GM12878 (cell line): ENCODE measurements at regions of chr14 and their contacts with region 1.

Region 1: DNA sequence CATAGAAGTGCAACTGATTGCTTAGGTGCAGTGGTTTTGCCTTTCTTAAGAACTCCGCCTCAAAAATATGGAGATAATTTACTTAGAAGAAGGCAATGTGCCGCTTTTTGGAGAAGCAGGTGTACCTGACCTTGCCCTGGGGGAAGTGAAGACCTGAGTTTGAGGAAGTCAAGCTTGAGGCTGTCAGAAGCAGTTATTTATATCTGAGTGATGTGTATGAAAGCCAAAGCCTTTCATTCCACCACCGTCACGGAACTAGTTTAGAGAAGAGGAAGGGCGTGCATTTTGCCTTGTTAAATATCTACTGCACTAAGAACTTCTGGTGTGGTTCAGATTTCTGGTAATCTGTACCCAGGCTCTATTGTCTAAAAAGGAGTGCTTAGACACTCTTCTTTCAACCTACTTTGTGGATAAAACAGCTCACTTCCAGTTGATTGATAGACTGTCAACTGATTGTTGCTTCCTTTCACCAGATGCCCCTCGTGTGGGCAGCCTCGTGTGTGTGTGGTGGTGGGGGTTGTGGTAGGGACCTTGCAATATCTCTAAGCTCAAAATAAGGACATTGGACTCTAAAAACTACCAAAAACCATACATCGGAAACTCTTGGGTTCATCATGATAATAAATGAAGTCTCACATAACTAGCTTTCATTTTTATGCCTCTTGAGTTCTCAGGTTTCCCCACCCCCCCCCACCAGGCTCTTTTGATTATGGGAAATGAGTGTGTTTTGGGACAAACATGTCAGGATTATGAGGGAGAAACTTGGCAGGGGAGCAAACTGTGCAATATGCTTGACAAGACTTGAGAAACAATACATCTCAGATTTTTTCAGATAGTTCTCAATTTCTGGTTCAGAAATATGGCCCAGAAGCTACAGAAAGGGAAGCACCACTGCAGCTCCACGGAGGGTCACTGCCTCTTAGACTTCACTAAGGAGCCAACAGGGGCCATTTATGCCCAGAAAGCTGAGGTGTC is 78.6 kb downstream of the ARF6 start:
- DNase-seq: peak; percentile 89
- ATAC-seq: peak; percentile 90
- H3K4me3 ChIP-seq: peak overlapping the region; percentile 49
- H3K27ac ChIP-seq: peak overlapping the region; percentile 100
- H3K4me1 ChIP-seq: peaks cover 39% of the 10 kb centered on the region
- H3K27me3 ChIP-seq: no peaks in the 10 kb centered on the region
- CTCF ChIP-seq: no peak
- EP300 ChIP-seq: peak; percentile 90 to 95
- POLR2A ChIP-seq: peak; percentile 24; the same call in 1 of the 2 replicates
- RAD21 ChIP-seq: no peak

Region 2: GRCh38 chr14:49478791-49479190 is 492.7 kb before region 1 on chr14:
- CTCF ChIA-PET with region 1: no interaction called
- POLR2A ChIA-PET with region 1: no interaction called
- RAD21 ChIA-PET with region 1: no interaction called
- SMC1A ChIA-PET with region 1: no interaction called
- in situ Hi-C with region 1: no loop called
- intact Hi-C with region 1: no loop called
- DNase-seq: no peak
- ATAC-seq: no peak
- H3K4me3 ChIP-seq: no peak overlapping the region
- H3K27ac ChIP-seq: no peak overlapping the region
- H3K4me1 ChIP-seq: peaks cover 10% of the 10 kb centered on the region; the same call in 1 of the 2 replicates
- H3K27me3 ChIP-seq: no peaks in the 10 kb centered on the region
- CTCF ChIP-seq: no peak
- EP300 ChIP-seq: no peak
- POLR2A ChIP-seq: no peak
- RAD21 ChIP-seq: no peak

Region 3: GRCh38 chr14:49538926-49539325 is 432.5 kb before region 1 on chr14:
- CTCF ChIA-PET with region 1: no interaction called
- POLR2A ChIA-PET with region 1: no interaction called
- RAD21 ChIA-PET with region 1: no interaction called
- SMC1A ChIA-PET with region 1: no interaction called
- in situ Hi-C with region 1: no loop called
- intact Hi-C with region 1: no loop called
- DNase-seq: no peak
- ATAC-seq: no peak
- H3K4me3 ChIP-seq: no peak overlapping the region
- H3K27ac ChIP-seq: no peak overlapping the region
- H3K4me1 ChIP-seq: no peaks in the 10 kb centered on the region
- H3K27me3 ChIP-seq: no peaks in the 10 kb centered on the region
- CTCF ChIP-seq: no peak
- EP300 ChIP-seq: no peak
- POLR2A ChIP-seq: no peak
- RAD21 ChIP-seq: no peak

Region 4: GRCh38 chr14:49867831-49868723 is 103.4 kb before region 1 on chr14:
- CTCF ChIA-PET with region 1: interaction called, 7 read pairs
- POLR2A ChIA-PET with region 1: interaction called, 23 read pairs
- RAD21 ChIA-PET with region 1: interaction called, 20 read pairs
- SMC1A ChIA-PET with region 1: interaction called, 27 read pairs
- in situ Hi-C with region 1: no loop called
- intact Hi-C with region 1: no loop called
- DNase-seq: peak; percentile 92
- ATAC-seq: peak; percentile 89
- H3K4me3 ChIP-seq: peak overlapping the region; percentile 89
- H3K27ac ChIP-seq: peak overlapping the region; percentile 93
- H3K4me1 ChIP-seq: peaks cover 20% of the 10 kb centered on the region
- H3K27me3 ChIP-seq: no peaks in the 10 kb centered on the region
- CTCF ChIP-seq: no peak
- EP300 ChIP-seq: no peak
- POLR2A ChIP-seq: peak; percentile 83
- RAD21 ChIP-seq: no peak

Region 5: DNA sequence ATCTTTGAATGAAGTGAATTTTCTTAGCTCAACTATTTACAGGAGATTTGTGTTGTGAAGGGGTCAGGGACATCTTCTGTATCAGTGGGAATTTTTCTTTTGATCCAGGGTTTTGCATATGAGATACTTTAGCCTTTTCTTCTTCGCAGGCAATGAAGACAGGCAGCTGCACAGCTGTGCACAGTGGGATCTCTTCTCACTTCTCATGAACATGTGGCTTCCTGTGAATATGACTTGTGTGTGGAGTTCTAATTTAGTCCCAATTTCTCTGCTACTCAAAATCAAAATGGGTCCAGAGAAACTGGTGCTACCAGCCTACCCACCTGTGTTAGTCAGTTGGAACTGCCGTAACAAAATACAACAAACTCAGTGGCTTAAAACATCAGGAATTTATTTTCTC is 40.7 kb before region 1 on chr14:
- CTCF ChIA-PET with region 1: no interaction called
- POLR2A ChIA-PET with region 1: interaction called, 7 read pairs
- RAD21 ChIA-PET with region 1: interaction called, 13 read pairs
- SMC1A ChIA-PET with region 1: interaction called, 4 read pairs
- in situ Hi-C with region 1: no loop called
- intact Hi-C with region 1: loop called (anchors 1 kb)
- DNase-seq: no peak
- ATAC-seq: peak; percentile 42
- H3K4me3 ChIP-seq: no peak overlapping the region
- H3K27ac ChIP-seq: no peak overlapping the region
- H3K4me1 ChIP-seq: peaks cover 16% of the 10 kb centered on the region
- H3K27me3 ChIP-seq: no peaks in the 10 kb centered on the region
- CTCF ChIP-seq: no peak
- EP300 ChIP-seq: no peak
- POLR2A ChIP-seq: no peak
- RAD21 ChIP-seq: no peak

Region 6: GRCh38 chr14:49959822-49960408 is 11.5 kb before region 1 on chr14:
- CTCF ChIA-PET with region 1: interaction called, 24 read pairs
- POLR2A ChIA-PET with region 1: interaction called, 21 read pairs
- RAD21 ChIA-PET with region 1: interaction called, 28 read pairs
- SMC1A ChIA-PET with region 1: interaction called, 60 read pairs
- in situ Hi-C with region 1: no loop called
- intact Hi-C with region 1: no loop called
- DNase-seq: peak; percentile 76
- ATAC-seq: peak; percentile 82
- H3K4me3 ChIP-seq: 0 out of 2 replicates have a peak overlapping the region, but pooled peaks have one; percentile 41
- H3K27ac ChIP-seq: peak overlapping the region; percentile 78
- H3K4me1 ChIP-seq: peaks cover 42% of the 10 kb centered on the region
- H3K27me3 ChIP-seq: no peaks in the 10 kb centered on the region
- CTCF ChIP-seq: no peak
- EP300 ChIP-seq: no peak
- POLR2A ChIP-seq: no peak
- RAD21 ChIP-seq: 0 out of 2 replicates have a peak, but pooled peaks have one; percentile 23

Region 7: DNA sequence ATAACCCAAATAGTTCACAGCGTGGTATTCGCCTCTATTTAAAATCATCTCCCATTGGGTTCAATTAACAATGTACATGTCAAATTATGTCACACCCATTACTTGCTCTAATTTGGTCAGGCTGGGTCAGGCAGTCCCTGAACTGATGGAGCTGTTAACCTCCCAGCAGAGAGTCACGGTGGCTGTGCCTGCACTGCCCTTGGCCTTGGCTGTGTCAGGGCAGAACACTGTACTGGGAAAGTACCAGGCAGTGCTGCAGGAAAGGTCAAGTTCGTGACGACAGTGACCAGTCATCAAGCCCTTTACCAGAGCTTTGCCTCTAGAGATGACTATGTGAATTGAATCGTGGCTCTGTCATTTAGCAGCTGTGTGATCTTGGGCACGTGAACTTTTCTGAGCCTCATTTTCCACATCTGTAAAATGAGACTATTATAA is 21.5 kb after region 1 on chr14:
- CTCF ChIA-PET with region 1: interaction called, 15 read pairs
- POLR2A ChIA-PET with region 1: interaction called, 119 read pairs
- RAD21 ChIA-PET with region 1: interaction called, 16 read pairs
- SMC1A ChIA-PET with region 1: interaction called, 133 read pairs
- in situ Hi-C with region 1: no loop called
- intact Hi-C with region 1: no loop called
- DNase-seq: peak; percentile 87
- ATAC-seq: peak; percentile 95
- H3K4me3 ChIP-seq: no peak overlapping the region
- H3K27ac ChIP-seq: peak overlapping the region; percentile 29; the same call in 1 of the 2 replicates
- H3K4me1 ChIP-seq: peaks cover 12% of the 10 kb centered on the region
- H3K27me3 ChIP-seq: no peaks in the 10 kb centered on the region
- CTCF ChIP-seq: no peak
- EP300 ChIP-seq: peak; percentile 91; a peak in 3 of 4 replicates
- POLR2A ChIP-seq: peak; percentile 75
- RAD21 ChIP-seq: no peak

Region 8: DNA sequence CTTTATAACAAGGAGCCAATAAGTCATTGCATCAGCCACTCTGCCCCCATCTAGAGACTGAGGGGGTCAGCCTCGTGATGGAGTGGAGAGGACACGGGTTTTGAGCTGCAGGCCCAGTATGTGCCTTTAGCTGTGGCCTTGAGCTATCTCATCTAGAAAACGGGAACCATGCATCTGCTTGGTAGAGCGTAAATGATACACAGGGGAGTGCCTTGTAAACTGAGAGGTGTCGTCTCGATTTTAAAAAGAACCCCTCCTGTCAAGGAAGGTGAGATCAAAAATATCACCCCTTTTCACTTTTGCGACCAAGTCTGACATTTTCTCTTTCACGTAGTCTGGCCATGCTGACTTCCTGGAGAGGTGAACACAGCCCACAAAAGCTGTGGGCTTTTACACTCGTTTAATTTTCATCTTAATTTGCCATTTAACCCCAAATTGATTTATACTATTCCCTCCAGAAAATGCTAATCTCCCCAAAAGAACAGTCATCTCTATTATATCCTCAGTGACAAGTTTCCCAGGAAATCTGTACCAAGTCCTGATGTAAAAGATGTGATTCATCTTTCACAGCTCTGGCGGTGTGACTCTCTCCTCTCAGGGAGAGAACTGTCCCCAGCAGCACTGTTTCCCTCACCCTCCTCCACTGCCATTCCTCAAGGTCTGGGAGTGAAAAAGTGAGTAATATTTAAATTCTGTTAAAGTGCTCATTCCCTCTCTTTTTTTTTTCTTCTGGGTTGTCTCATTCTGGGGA is 114.3 kb after region 1 on chr14:
- CTCF ChIA-PET with region 1: interaction called, 5 read pairs
- POLR2A ChIA-PET with region 1: interaction called, 9 read pairs
- RAD21 ChIA-PET with region 1: interaction called, 17 read pairs
- SMC1A ChIA-PET with region 1: interaction called, 16 read pairs
- in situ Hi-C with region 1: no loop called
- intact Hi-C with region 1: no loop called
- DNase-seq: peak; percentile 95
- ATAC-seq: peak; percentile 73
- H3K4me3 ChIP-seq: peak overlapping the region; percentile 38; the same call in 1 of the 2 replicates
- H3K27ac ChIP-seq: peak overlapping the region; percentile 95
- H3K4me1 ChIP-seq: peaks cover 68% of the 10 kb centered on the region
- H3K27me3 ChIP-seq: no peaks in the 10 kb centered on the region
- CTCF ChIP-seq: no peak
- EP300 ChIP-seq: peak; percentile 85 to 91
- POLR2A ChIP-seq: peak; percentile 48; the same call in 1 of the 2 replicates
- RAD21 ChIP-seq: no peak